Lower leg skin (tissue), 4 donors: ENCODE measurements at regions of chr9 and their contacts with region 1.

Region 1: DNA sequence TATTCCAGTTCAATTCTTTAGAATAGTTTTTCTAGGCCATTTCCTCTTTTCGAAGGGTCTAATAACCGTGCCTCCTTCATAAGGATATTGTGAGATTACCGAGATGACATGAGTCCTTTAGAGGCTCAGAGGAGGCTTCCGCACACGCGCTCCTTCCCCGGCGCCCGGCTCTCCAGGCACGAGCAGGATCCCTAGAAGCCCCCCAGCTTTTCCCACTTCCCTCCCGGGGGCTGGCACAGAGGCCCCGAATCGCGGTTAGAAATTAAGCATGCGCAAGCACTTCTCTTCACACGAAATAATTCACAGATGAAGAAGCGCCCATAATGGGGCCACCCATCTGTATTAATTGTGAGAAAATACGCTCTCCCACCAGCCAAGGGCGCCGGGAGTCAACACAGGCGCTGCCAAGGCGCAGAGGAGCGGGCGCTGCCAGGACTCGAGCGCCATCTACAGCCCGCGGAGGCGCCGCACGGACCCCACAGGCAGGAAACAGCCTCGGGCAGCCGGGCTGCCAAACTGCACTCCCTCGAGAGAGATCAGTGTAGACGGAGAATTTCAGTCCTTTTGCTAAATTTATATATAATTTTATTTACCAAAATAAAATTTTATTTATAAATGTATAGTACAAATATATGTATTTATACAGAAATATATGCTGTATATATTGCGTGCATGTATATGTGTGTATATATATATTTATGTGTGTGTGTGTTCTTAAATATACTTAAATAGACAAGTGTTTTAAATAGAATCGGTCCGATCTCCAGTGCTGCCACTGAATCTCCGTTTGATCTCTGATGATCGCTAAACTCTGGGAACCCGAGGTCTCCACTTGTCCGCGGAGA is 258.1 kb upstream of the NFIL3 start:
- DNase-seq: peak; percentile 35 to 92
- H3K4me3 ChIP-seq: no peak overlapping the region
- CTCF ChIP-seq: no peak
- POLR2A ChIP-seq: no peak

Region 2: DNA sequence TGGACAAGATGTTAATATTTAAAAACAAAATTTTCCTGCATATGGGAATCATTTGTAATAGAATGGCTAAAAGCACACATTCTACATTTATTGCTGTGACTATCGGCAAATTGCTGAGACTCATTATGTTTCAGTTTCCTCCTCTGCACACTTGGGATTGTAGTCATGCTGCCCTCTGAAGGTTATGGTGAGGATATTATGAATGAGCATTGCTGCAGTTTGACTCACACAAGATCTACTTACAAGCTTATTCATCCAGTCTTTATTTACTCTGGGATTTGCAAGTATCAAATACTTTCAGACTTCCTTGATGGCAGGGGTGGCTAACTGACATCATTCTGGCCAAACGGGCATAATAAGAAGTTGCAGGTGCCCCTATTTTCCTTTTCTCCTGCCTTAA is 248.5 kb before region 1 on chr9:
- intact Hi-C with region 1: loop called (anchors 10 kb)
- DNase-seq: no peak
- H3K4me3 ChIP-seq: no peak overlapping the region
- CTCF ChIP-seq: no peak
- POLR2A ChIP-seq: no peak

Region 3: GRCh38 chr9:91629718-91630117 is 52.0 kb before region 1 on chr9:
- intact Hi-C with region 1: no loop called
- DNase-seq: no peak
- H3K4me3 ChIP-seq: no peak overlapping the region
- CTCF ChIP-seq: no peak
- POLR2A ChIP-seq: no peak